ENCODE measurements at regions of chr11 and their contacts with region 1.

Region 1: GRCh38 chr11:94922310-94923003 is 50.9 kb downstream of the CWC15 start:
- H3K4me3 ChIP-seq: no peak overlapping the region
- H3K27ac ChIP-seq: no peak overlapping the region
- H3K4me1 ChIP-seq: no peaks in the 10 kb centered on the region
- CTCF ChIP-seq: no peak

Region 2: GRCh38 chr11:96199563-96200025 is 1277.1 kb after region 1 on chr11:
- CTCF ChIA-PET with region 1: interaction called, 10 read pairs
- POLR2A ChIA-PET with region 1: no interaction called
- H3K4me3 ChIP-seq: no peak overlapping the region
- H3K27ac ChIP-seq: no peak overlapping the region
- H3K4me1 ChIP-seq: peaks cover 2% of the 10 kb centered on the region; the same call in 1 of the 2 replicates
- CTCF ChIP-seq: no peak

Measured in HEK293 (cell line).